T-cell (primary cell): ENCODE measurements at regions of chr9 and their contacts with region 1.

Region 1: GRCh38 chr9:83701769-83702168 is 6.0 kb downstream of the UBQLN1 start:
- DNase-seq: no peak
- ATAC-seq: no peak
- H3K4me3 ChIP-seq: no peak overlapping the region
- H3K4me3 Mint-ChIP-seq: peak overlapping the region in 1 of 3 donors; percentile 48
- H3K27ac ChIP-seq: no peak overlapping the region
- H3K27ac Mint-ChIP-seq: no peak overlapping the region
- H3K4me1 ChIP-seq: peaks cover 33 to 38% of the 10 kb centered on the region in 2 experiments
- H3K4me1 Mint-ChIP-seq: peaks cover 80 to 91% (median 88%) of the 10 kb centered on the region in 3 donors
- H3K27me3 ChIP-seq: no peaks in the 10 kb centered on the region
- H3K27me3 Mint-ChIP-seq: no peaks in the 10 kb centered on the region

Region 2: DNA sequence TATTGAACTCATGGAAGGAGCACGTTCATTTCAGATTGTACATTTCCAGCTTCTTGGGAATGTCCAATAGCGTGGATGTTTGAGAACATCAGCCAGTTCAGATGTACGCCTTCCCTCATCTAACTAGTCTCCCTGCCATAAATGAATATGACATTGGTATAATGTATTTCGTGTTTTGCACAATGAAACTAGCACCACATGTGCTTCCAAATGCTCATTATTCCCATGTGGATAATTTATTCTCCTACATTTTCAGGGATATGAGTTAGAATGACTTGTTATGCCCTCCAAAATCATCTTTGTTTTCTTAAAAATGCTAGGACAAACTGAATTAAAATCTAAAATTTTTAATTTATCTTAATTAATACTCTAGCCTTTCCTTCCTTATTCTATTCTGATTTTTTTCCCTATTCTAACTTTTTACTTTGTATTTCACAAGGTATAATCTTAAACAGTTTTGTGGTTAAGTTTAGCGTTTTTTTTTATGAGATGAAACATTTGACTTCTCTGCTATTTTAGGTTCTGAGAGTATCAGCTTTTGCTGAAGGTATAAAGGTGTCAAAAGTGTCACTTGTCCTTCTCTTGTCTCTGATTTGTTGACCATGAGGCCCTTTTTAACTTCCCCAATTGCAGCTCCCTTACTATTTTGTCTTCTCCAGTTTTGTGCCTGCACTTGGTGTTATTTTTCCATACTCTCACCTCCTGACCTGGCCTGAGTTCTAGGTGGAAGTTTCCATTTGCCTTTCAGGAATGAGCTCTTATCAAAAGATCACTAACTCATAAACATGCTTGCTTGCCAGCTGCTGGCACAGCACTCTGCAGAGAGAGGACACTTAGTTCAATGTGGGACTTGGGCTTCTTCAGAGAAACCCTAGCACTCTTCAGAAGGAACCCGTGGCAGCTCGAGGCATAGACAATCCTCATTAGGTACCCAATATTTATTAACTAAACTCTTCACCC is 270.4 kb before region 1 on chr9:
- CTCF ChIA-PET with region 1: no interaction called
- POLR2A ChIA-PET with region 1: no interaction called
- DNase-seq: no peak
- ATAC-seq: no peak
- H3K4me3 ChIP-seq: no peak overlapping the region
- H3K4me3 Mint-ChIP-seq: no peak overlapping the region
- H3K27ac ChIP-seq: no peak overlapping the region
- H3K27ac Mint-ChIP-seq: no peak overlapping the region
- H3K4me1 ChIP-seq: no peaks in the 10 kb centered on the region
- H3K4me1 Mint-ChIP-seq: no peaks in the 10 kb centered on the region
- H3K27me3 ChIP-seq: no peaks in the 10 kb centered on the region
- H3K27me3 Mint-ChIP-seq: no peaks in the 10 kb centered on the region

Region 3: GRCh38 chr9:83920927-83921707 is 219.3 kb after region 1 on chr9 and contains the start of gene KIF27:
- CTCF ChIA-PET with region 1: no interaction called
- POLR2A ChIA-PET with region 1: interaction called in 1 of 2 experiments, 14 read pairs
- DNase-seq: peak; percentile 84 to 97 (median 93)
- ATAC-seq: peak; percentile 86 to 91 (median 89)
- H3K4me3 ChIP-seq: peak within 1 kb of the TSS; percentile 49 to 68
- H3K4me3 Mint-ChIP-seq: peak within 1 kb of the TSS; percentile 88 to 90 (median 89)
- H3K27ac ChIP-seq: peak within 1 kb of the TSS; percentile 88
- H3K27ac Mint-ChIP-seq: peak within 1 kb of the TSS; percentile 95
- H3K4me1 ChIP-seq: peaks cover 5 to 16% of the 10 kb centered on the region in 2 experiments
- H3K4me1 Mint-ChIP-seq: peaks cover 8 to 15% (median 12%) of the 10 kb centered on the region in 3 donors
- H3K27me3 ChIP-seq: no peaks in the 10 kb centered on the region
- H3K27me3 Mint-ChIP-seq: no peaks in the 10 kb centered on the region
- total RNA-seq, gene KIF27: 3.3 to 5.6 (median 4.5) TPM